Activated T-helper 1 cell treated with anti-CD3 and anti-CD28 coated beads, Interleukin-12 subunit alpha, Interleukin-12 subunit beta, Interleukin-2, Interleukin-4 antibody, amounts not matched to agents 30 ng/mL and 10 ng/mL and 1 ng/mL, durations not matched to agents 14 hours and 24 hours and 36 hours (primary cell): ENCODE measurements at regions of chr3 and their contacts with region 1.

Region 1: GRCh38 chr3:124552239-124552638 is 178.0 kb upstream of the UMPS start:
- DNase-seq: no peak
- H3K4me3 Mint-ChIP-seq: no peak overlapping the region
- H3K27ac Mint-ChIP-seq: no peak overlapping the region
- H3K4me1 Mint-ChIP-seq: peaks cover 9% of the 10 kb centered on the region
- H3K27me3 Mint-ChIP-seq: peaks cover 43% of the 10 kb centered on the region

Region 2: DNA sequence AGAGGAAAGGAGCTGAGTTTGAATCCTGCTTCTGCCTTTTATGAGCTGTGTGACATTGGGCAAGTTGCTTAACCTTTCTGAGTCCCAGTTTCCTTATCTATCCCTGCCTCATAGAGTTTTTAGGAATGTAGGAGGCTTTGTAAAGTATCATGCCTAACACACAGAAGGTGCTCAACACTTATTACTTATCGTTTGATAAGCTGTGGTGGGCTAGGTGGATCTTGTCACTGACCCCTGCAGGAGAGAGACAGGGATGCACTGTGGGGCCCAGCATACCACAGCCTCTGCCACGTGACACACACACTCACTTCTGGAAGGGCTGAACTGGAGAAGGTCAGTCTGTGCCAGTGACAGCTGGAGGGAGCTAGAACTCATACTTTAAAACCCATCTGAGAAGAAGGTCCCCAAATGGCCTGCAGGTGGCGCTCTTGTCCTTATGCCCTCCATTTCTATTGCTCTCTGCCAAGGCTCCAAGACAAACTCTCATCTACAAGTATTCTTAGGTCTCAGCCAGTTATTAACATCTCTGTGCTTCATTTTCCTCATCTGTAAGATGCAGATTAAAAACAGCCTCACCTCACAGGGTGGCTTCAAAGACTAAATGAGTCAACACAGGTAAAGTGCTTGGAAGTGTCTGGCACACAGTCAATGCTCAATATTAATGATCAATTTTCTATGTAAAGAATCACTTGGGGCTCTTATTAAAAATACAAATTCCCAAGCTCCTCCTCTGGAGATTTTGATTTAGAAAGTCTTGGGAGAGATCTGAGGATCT is 909.9 kb before region 1 on chr3:
- intact Hi-C with region 1: loop called (anchors 2 kb)
- DNase-seq: peak; percentile 27
- H3K4me3 Mint-ChIP-seq: no peak overlapping the region
- H3K27ac Mint-ChIP-seq: no peak overlapping the region
- H3K4me1 Mint-ChIP-seq: no peaks in the 10 kb centered on the region
- H3K27me3 Mint-ChIP-seq: peaks cover 2% of the 10 kb centered on the region

Region 3: GRCh38 chr3:124097362-124098131 is 454.7 kb before region 1 on chr3:
- intact Hi-C with region 1: no loop called
- DNase-seq: no peak
- H3K4me3 Mint-ChIP-seq: no peak overlapping the region
- H3K27ac Mint-ChIP-seq: no peak overlapping the region
- H3K4me1 Mint-ChIP-seq: no peaks in the 10 kb centered on the region
- H3K27me3 Mint-ChIP-seq: peaks cover 4% of the 10 kb centered on the region

Region 4: DNA sequence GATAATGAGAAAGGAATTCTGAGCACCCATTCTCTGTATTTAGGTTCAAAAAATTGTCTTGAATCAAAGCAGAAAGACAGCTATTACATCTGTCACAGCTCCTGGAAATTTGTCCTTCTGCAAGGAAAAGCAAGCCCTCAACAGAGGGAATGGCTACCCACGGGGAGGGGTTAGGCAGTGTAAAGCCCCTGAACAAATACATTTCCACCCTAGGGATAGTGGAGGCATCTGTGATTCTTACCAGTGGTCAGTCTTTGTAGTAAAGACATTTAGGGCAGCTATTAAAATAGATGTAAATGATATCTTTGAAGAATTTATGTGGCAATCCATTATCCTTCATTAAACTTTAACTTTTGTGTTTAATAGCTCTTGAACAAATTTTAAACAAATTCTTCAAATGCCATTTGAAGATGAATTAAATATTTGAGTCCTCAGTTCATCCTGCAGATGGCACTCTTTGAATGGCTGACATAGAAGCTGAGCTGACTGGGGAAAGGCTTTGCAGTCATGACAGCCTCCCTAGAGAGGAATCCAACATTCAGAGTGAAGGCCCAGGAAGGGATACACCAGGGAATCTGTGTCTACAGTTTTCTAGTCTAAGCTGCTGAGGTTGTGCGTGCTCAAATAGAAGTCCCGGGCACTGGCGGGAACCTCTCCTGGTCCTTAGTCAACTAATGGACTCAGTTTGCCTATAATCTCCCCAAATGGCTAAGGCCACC is 200.7 kb before region 1 on chr3:
- intact Hi-C with region 1: loop called (anchors 1 kb)
- DNase-seq: no peak
- H3K4me3 Mint-ChIP-seq: no peak overlapping the region
- H3K27ac Mint-ChIP-seq: no peak overlapping the region
- H3K4me1 Mint-ChIP-seq: no peaks in the 10 kb centered on the region
- H3K27me3 Mint-ChIP-seq: peaks cover 10% of the 10 kb centered on the region

Region 5: DNA sequence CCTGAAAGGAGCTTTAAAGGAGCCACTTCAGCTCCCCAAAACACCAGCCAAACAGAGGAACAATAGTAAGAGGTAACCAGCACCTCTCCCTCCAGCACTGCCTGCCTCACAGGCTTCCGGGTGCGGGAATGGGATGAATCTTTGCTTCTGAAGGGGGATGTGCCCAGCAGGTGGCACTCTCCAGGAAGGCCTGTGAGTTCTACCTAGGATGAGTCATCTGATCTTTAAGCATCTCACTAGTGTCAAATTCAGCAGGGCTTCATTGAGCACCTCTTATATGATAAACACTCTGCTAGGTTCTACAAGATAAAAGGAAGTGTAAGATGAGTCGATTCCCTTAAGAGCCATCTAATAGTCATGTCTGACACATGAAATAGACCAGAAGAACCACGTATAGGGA is 59.4 kb before region 1 on chr3:
- intact Hi-C with region 1: loop called (anchors 2 kb)
- DNase-seq: no peak
- H3K4me3 Mint-ChIP-seq: no peak overlapping the region
- H3K27ac Mint-ChIP-seq: no peak overlapping the region
- H3K4me1 Mint-ChIP-seq: peaks cover 8% of the 10 kb centered on the region
- H3K27me3 Mint-ChIP-seq: peaks cover 10% of the 10 kb centered on the region

Region 6: GRCh38 chr3:125024817-125025216 is 472.6 kb after region 1 on chr3:
- intact Hi-C with region 1: no loop called
- DNase-seq: no peak
- H3K4me3 Mint-ChIP-seq: no peak overlapping the region
- H3K27ac Mint-ChIP-seq: no peak overlapping the region
- H3K4me1 Mint-ChIP-seq: peaks cover 64% of the 10 kb centered on the region
- H3K27me3 Mint-ChIP-seq: no peaks in the 10 kb centered on the region